ENCODE measurements at regions of chr17 and their contacts with region 1.

Region 1: DNA sequence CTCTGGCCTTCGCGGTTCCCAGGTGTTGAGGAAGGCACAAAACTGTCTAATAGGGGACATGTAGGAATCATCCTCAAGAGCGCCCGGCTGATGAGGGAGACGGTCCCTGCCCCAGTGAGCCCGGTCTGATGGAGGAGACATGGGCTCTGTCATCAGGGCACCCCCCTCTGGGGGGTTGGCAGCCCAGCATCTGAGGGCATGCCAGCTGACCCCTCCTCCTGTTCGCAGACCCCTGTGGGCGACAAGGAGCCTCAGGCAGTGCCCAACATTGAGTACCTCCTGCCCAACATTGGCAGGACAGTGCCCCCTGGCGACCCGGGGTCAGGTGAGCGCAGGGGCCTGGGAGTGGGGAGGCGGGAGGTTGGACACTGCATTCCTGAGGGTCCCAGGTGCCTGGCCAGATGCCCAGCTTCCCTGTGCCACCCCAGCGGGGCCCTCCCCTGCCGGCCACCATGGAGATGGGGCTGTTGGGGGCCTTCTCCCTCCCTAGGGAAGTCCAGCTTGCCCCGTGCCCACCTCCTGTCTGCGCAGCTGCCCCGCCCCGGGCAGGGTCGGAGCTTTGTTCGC is 70.0 kb downstream of the ARHGAP23 start:
- DNase-seq: no peak
- ATAC-seq: no peak
- H3K4me3 ChIP-seq: no peak overlapping the region
- H3K27ac ChIP-seq: no peak overlapping the region
- H3K4me1 ChIP-seq: no peaks in the 10 kb centered on the region
- H3K27me3 ChIP-seq: no peaks in the 10 kb centered on the region
- CTCF ChIP-seq: no peak
- EP300 ChIP-seq: no peak
- POLR2A ChIP-seq: no peak
- RAD21 ChIP-seq: no peak

Region 2: DNA sequence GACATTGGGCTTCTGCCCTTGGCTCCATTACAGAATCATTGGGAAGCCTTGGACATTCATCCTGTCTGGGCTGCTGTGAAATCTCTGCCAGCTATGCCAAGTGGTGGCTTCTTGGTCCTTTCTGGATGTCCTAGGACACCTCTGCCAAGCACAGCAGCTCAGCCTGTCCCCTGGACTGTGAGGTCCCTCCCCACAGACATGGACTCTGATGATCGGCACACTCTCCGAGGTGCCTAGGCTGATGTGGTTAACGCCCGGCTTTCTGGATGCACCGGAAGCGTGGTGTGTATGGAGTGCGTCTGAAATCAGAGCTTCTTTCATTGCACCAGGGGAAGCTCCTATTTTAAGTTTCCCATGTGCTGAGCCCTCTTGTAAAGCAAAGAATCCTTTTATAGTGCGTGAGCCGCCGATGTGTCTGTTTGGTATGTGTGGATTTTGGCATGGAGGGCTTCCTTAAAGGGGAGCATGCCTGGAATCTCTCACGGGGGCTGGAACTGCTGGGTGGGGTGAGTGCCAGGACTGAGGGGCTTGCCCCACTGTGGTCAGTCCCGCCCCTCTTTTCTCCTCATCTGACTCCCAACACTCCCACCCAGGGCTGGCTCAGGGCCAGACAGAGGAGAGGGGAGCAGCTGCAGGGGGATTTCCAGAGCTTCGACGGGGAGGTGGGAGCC is 77.0 kb before region 1 on chr17:
- CTCF ChIA-PET with region 1: interaction called, 11 read pairs
- POLR2A ChIA-PET with region 1: no interaction called
- RAD21 ChIA-PET with region 1: no interaction called
- SMC1A ChIA-PET with region 1: no interaction called
- in situ Hi-C with region 1: no loop called
- intact Hi-C with region 1: loop called (anchors 2 kb)
- DNase-seq: no peak
- ATAC-seq: no peak
- H3K4me3 ChIP-seq: no peak overlapping the region
- H3K27ac ChIP-seq: no peak overlapping the region
- H3K4me1 ChIP-seq: peaks cover 6% of the 10 kb centered on the region
- H3K27me3 ChIP-seq: peaks cover 4 to 6% of the 10 kb centered on the region in 2 experiments; a peak in 3 of 4 replicates
- CTCF ChIP-seq: no peak
- EP300 ChIP-seq: no peak
- POLR2A ChIP-seq: no peak
- RAD21 ChIP-seq: no peak

Region 3: GRCh38 chr17:38444151-38444550 is 54.1 kb before region 1 on chr17:
- CTCF ChIA-PET with region 1: no interaction called
- POLR2A ChIA-PET with region 1: no interaction called
- RAD21 ChIA-PET with region 1: no interaction called
- SMC1A ChIA-PET with region 1: no interaction called
- in situ Hi-C with region 1: loop called (anchors 5 kb)
- intact Hi-C with region 1: loop called (anchors 2 kb)
- DNase-seq: no peak
- ATAC-seq: peak; percentile 94
- H3K4me3 ChIP-seq: no peak overlapping the region
- H3K27ac ChIP-seq: no peak overlapping the region
- H3K4me1 ChIP-seq: peaks cover 5% of the 10 kb centered on the region; the same call in 1 of the 2 replicates
- H3K27me3 ChIP-seq: no peaks in the 10 kb centered on the region
- CTCF ChIP-seq: peak; percentile 85 to 93 (median 89)
- EP300 ChIP-seq: no peak
- POLR2A ChIP-seq: no peak
- RAD21 ChIP-seq: peak; percentile 70

Region 4: DNA sequence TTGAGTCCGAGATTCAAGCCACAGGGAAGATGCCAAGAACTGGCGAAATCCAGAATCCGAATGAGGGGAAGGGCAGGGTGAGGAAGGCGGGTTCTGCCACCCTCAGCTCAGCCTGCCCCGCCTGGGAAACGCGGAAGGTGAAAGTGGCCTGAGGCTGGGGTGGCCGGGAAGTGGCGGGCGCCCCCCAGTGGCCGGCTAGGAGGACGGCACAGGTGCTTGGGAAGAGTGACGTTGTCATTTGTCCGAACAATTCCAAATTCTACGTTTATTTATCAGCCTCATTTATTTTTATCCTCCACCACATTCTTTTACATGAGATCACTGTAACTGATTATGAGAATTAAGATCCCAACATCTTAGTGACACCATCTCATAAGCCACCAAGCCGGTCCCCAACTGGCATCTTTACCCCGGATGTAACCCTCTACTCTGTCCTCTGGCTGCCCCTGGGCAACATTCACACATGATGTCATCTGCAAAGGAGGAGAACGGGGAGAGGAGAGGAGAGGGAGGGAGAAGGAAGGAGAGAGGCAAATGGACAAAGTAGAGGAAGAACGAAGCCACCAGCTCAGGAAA is 86.2 kb after region 1 on chr17:
- CTCF ChIA-PET with region 1: no interaction called
- POLR2A ChIA-PET with region 1: no interaction called
- RAD21 ChIA-PET with region 1: no interaction called
- SMC1A ChIA-PET with region 1: interaction called, 4 read pairs
- in situ Hi-C with region 1: loop called (anchors 5 kb)
- intact Hi-C with region 1: loop called (anchors 2 kb)
- DNase-seq: no peak
- ATAC-seq: peak; percentile 93
- H3K4me3 ChIP-seq: no peak overlapping the region
- H3K27ac ChIP-seq: no peak overlapping the region
- H3K4me1 ChIP-seq: peaks cover 8% of the 10 kb centered on the region
- H3K27me3 ChIP-seq: peaks cover 0 to 4% of the 10 kb centered on the region in 2 experiments; a peak in 3 of 4 replicates
- CTCF ChIP-seq: peak; percentile 88 to 93 (median 91)
- EP300 ChIP-seq: no peak
- POLR2A ChIP-seq: no peak
- RAD21 ChIP-seq: peak; percentile 75

Region 5: GRCh38 chr17:38654411-38655398 is 156.4 kb after region 1 on chr17:
- CTCF ChIA-PET with region 1: no interaction called
- POLR2A ChIA-PET with region 1: no interaction called
- RAD21 ChIA-PET with region 1: no interaction called
- SMC1A ChIA-PET with region 1: no interaction called
- in situ Hi-C with region 1: no loop called
- intact Hi-C with region 1: no loop called
- DNase-seq: peak; percentile 64
- ATAC-seq: peak; percentile 94
- H3K4me3 ChIP-seq: peak overlapping the region; percentile 33; the same call in 1 of the 2 replicates
- H3K27ac ChIP-seq: peak overlapping the region; percentile 87
- H3K4me1 ChIP-seq: peaks cover 60% of the 10 kb centered on the region
- H3K27me3 ChIP-seq: no peaks in the 10 kb centered on the region
- CTCF ChIP-seq: no peak
- EP300 ChIP-seq: no peak
- POLR2A ChIP-seq: no peak
- RAD21 ChIP-seq: no peak